MCF 10A (cell line): ENCODE measurements at regions of chr2 and their contacts with region 1.

Region 1: DNA sequence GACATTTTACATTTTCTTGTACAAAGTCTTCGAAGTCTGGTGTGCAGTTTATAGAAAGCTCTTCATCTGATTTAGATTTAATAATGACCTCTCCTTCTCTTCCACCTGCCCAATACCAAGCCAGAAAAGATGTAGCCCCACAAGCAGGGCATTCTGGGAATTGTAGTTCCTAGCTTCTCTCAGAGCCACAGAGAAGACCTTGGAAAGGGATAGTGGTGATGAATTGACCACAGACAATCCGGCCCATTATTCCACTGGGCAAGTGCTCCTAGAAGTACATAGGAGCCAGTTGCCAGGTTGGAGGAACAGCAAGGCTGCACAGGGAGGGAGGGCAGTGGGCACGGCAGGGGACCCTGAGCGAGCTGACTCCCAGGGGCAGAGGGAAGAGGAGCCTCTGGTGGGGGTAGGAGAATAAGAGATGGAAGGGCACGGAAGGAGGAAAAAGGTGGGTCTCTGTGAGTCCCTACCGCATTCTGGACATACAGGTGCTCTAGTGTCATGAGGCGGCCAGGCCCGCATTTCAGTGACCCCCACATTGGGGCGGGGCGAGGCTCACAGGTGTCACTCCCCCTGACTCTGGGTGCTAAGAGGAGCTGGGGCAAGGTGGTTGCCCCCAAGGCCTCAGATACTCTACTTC is 152.5 kb upstream of the HAAO start:
- DNase-seq: no peak
- H3K4me3 Mint-ChIP-seq: no peak overlapping the region
- H3K27ac Mint-ChIP-seq: no peak overlapping the region
- H3K4me1 Mint-ChIP-seq: peaks cover 10% of the 10 kb centered on the region
- H3K27me3 Mint-ChIP-seq: no peaks in the 10 kb centered on the region
- CTCF ChIP-seq: no peak

Region 2: GRCh38 chr2:42957109-42957860 is 12.4 kb after region 1 on chr2:
- CTCF ChIA-PET with region 1: interaction called, 34 read pairs
- POLR2A ChIA-PET with region 1: no interaction called
- intact Hi-C with region 1: no loop called
- DNase-seq: peak; percentile 48
- H3K4me3 Mint-ChIP-seq: no peak overlapping the region
- H3K27ac Mint-ChIP-seq: no peak overlapping the region
- H3K4me1 Mint-ChIP-seq: peaks cover 26% of the 10 kb centered on the region
- H3K27me3 Mint-ChIP-seq: no peaks in the 10 kb centered on the region
- CTCF ChIP-seq: no peak

Region 3: DNA sequence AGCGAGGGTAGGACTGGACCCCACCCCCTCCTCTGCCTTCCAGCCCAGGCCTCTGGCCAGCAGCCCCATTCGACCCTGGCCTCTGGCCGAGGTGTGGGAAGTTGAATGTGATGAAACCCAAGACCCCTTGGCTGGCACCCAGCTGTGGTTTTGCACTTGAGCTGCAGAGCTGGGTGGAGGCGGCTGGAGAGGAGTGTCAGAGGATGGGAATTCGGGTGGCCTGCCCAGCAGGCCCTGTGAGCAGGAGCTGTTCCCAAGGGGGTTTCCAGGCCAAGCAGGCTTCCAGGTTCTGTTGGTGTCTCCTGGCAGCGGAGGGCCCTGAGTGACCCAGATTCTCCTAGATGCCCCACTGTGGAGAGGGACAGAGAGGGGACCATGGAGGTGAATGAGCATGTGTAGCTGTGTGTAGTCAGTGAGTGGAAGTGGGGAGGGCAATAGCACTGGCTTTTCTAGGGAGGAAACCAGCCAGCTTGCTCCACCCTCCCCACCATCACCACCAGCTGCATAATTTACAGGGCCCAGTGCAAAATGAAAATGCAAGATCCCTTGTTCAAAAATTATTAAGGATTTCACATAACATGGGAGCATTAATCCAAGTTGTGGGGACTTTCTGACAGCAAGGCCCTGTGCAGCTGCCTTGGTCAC is 19.7 kb after region 1 on chr2:
- CTCF ChIA-PET with region 1: interaction called, 34 read pairs
- POLR2A ChIA-PET with region 1: no interaction called
- intact Hi-C with region 1: no loop called
- DNase-seq: peak; percentile 90
- H3K4me3 Mint-ChIP-seq: no peak overlapping the region
- H3K27ac Mint-ChIP-seq: peak overlapping the region; percentile 80
- H3K4me1 Mint-ChIP-seq: peaks cover 29% of the 10 kb centered on the region
- H3K27me3 Mint-ChIP-seq: no peaks in the 10 kb centered on the region
- CTCF ChIP-seq: no peak

Region 4: DNA sequence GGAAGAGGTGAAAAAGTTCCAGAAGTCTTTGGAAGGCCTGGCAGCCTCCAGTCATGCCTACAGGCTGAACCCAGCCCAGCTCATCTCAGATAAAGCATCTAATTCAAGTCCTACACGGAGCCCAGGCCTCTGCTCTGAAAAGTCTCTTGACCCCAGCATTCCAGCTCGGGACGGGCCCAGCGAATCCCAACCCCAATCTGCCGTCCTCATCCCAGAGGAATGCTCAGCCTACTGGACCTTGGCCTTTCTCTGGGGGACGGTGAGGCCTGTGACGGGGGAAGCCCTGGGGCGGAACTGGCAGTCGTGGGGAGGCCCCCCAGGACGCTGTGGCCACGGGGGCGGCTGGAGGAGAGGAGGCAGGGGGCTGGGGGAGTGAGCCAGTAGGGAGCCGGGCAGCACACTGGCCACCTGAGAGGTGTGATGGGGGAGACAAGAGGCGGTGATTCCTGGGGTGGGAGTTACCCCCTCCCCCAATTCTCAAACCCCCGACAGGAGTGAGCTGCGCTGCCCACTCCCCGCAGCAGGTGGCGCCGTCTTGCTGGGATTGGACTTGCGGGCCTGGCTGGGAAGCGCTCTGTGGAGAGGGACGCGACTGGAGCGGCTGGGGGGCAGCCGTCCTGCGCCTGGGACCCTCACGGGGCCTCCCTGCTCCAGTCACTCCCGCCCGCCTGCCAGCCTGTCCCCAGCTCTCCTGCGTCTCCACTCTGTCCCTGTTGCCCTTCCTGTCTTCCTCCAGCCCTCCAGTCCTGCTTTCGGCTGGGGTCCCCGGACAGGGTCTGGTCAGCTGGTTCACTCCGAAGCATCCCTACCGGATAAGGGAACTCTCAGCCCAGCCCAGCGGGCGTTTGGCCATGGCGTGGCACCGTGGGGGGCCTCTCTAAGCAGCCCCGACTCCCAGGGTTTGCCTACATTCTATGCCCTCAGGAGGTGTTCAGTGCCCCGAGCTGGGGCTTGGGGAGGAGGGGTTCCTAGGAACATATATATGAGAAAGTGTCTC is 30.1 kb after region 1 on chr2:
- CTCF ChIA-PET with region 1: interaction called, 10 read pairs
- POLR2A ChIA-PET with region 1: no interaction called
- intact Hi-C with region 1: no loop called
- DNase-seq: peak; percentile 64
- H3K4me3 Mint-ChIP-seq: no peak overlapping the region
- H3K27ac Mint-ChIP-seq: peak overlapping the region; percentile 52
- H3K4me1 Mint-ChIP-seq: peaks cover 38% of the 10 kb centered on the region
- H3K27me3 Mint-ChIP-seq: no peaks in the 10 kb centered on the region
- CTCF ChIP-seq: peak; percentile 95

Region 5: DNA sequence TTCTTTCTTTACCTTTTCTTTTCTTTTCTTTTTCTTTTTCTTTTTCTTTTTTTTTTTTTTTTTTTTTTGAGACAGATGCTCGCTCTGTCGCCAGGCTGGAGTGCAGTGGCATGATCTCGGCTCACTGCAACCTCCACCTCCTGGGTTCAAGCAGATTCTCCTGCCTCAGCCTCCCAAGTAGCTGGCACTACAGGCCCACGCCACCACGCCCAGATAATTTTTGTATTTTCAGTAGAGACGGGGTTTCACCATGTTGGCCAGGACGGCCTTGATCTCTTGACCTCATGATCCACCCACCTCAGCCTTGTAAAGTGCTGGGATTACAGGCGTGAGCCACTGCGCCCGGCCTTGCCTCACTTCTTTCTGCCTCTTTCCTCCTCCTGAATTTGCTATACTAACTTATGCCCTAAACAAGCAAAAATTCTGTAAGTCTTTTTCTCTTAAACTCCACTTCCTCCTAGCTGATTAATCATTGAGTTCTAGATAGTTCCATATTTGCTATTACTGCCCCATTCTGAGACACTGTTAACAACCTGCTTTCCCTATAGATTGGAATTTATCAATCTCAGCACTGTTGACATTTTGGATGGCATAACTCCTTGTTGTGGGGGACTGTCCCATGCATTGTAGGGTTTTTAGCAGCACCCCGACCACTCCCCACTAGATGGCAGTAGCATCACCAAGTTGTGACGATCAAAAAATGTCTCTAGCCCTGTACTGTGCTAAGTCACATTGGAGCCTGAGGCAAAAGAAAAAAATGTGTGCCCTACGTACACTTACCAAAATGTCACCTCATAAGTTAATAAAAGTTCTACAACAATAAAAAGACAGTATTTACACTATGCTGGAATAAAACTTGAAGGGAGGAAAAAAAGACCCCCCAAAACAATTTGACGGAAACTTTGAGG is 667.3 kb after region 1 on chr2:
- CTCF ChIA-PET with region 1: interaction called, 3 read pairs
- POLR2A ChIA-PET with region 1: no interaction called
- intact Hi-C with region 1: loop called (anchors 2 kb)
- DNase-seq: peak; percentile 82
- H3K4me3 Mint-ChIP-seq: no peak overlapping the region
- H3K27ac Mint-ChIP-seq: no peak overlapping the region
- H3K4me1 Mint-ChIP-seq: peaks cover 6% of the 10 kb centered on the region
- H3K27me3 Mint-ChIP-seq: no peaks in the 10 kb centered on the region
- CTCF ChIP-seq: peak; percentile 68